Mammary epithelial cell (primary cell): ENCODE measurements at regions of chr5 and their contacts with region 1.

Region 1: DNA sequence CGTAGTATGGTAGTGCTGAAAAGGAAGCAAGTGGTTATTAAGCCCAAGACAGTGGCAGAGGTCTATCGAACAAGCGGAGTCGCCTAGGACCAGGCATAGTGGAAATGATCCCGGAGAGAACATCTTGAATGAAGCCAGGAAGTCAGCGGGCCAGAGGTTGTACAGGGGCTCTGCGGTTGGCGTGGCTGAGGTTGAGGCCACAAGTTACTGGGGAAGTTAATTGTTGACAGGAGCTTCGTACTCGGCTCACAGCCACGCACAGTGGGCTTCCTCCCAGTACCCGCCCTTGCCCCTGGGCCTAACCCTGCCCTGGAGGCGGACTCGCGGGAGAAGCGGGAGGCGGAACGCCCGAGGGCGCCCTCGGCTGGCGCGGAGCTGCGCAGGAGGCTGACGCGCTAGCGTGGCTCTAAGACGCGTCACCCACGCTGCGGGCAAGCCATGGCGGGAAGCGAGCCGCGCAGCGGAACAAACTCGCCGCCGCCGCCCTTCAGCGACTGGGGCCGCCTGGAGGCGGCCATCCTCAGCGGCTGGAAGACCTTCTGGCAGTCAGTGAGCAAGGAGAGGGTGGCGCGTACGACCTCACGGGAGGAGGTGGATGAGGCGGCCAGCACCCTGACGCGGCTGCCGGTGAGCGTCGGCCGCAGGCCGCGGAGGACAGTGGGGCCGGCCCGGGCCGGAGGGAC is at the start of gene FBXO4:
- DNase-seq: peak; percentile 68
- H3K4me3 ChIP-seq: peak within 1 kb of the TSS; percentile 60 to 72 (median 68)
- H3K27ac ChIP-seq: peak within 1 kb of the TSS; percentile 92
- H3K4me1 ChIP-seq: peaks cover 21% of the 10 kb centered on the region
- H3K27me3 ChIP-seq: no peaks in the 10 kb centered on the region
- CTCF ChIP-seq: peak in 1 of 2 donors; percentile 54
- total RNA-seq, gene FBXO4: 8.0 to 8.8 TPM

Region 2: GRCh38 chr5:41856644-41857491 is 68.1 kb before region 1 on chr5:
- CTCF ChIA-PET with region 1: no interaction called
- dilution Hi-C with region 1: no loop called
- in situ Hi-C with region 1: no loop called
- intact Hi-C with region 1: loop called (anchors 2 kb)
- DNase-seq: peak; percentile 47
- H3K4me3 ChIP-seq: no peak overlapping the region
- H3K27ac ChIP-seq: no peak overlapping the region
- H3K4me1 ChIP-seq: no peaks in the 10 kb centered on the region
- H3K27me3 ChIP-seq: no peaks in the 10 kb centered on the region
- CTCF ChIP-seq: peak; percentile 74 to 78

Region 3: DNA sequence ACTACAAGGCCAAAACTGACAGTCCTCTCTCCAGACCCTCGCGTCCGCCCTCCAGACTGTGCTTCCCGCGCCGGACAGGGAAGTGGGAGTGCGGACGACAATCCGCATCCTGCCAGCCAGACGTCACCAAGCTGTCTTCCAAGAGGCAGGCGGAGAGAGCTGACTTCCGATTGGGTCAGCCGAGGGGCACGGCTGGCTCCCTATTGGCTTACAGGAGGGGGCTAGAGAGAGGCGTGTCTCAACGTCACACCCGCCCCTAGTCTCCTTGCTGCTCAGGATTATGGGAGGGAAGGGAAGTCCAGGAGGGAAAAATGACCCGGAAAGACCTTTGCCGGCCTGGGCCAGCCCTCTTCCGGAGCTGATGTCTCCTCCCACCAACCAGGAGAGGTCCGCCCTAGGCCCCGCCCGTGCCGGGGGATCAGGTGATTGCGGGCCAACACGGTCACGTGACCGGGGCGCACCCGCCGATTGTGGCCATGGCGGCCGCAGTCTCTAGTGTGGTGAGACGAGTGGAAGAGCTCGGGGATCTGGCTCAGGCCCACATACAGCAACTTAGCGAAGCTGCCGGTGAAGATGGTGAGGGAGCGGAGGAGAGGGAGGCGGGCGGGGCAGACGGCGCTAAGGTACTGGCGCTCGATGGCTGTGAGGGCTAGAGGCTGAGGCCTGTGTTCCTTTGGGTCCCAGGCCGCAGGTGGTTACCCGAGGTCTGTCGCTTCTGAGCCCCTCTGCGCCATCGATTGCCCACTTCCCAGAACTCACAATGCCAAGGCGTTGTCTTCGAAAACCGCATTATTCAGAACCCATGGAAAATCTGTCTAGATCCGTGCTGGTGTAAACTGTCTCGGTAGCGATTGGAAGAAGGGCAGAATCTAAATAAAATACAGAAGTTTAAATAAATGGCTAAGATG is 20.9 kb before region 1 on chr5 and contains the start of gene RIMOC1:
- CTCF ChIA-PET with region 1: no interaction called
- dilution Hi-C with region 1: no loop called
- in situ Hi-C with region 1: no loop called
- intact Hi-C with region 1: loop called (anchors 2 kb)
- DNase-seq: peak; percentile 99
- H3K4me3 ChIP-seq: peak within 1 kb of the TSS; percentile 82 to 97 (median 84)
- H3K27ac ChIP-seq: peak within 1 kb of the TSS; percentile 87
- H3K4me1 ChIP-seq: peaks cover 17% of the 10 kb centered on the region
- H3K27me3 ChIP-seq: no peaks in the 10 kb centered on the region
- CTCF ChIP-seq: no peak
- total RNA-seq, gene RIMOC1: 16.7 to 31.5 TPM

Region 4: GRCh38 chr5:41985945-41986344 is 60.9 kb after region 1 on chr5:
- CTCF ChIA-PET with region 1: no interaction called
- dilution Hi-C with region 1: no loop called
- in situ Hi-C with region 1: no loop called
- intact Hi-C with region 1: no loop called
- DNase-seq: no peak
- H3K4me3 ChIP-seq: no peak overlapping the region
- H3K27ac ChIP-seq: no peak overlapping the region
- H3K4me1 ChIP-seq: no peaks in the 10 kb centered on the region
- H3K27me3 ChIP-seq: peaks cover 5% of the 10 kb centered on the region
- CTCF ChIP-seq: no peak

Region 5: DNA sequence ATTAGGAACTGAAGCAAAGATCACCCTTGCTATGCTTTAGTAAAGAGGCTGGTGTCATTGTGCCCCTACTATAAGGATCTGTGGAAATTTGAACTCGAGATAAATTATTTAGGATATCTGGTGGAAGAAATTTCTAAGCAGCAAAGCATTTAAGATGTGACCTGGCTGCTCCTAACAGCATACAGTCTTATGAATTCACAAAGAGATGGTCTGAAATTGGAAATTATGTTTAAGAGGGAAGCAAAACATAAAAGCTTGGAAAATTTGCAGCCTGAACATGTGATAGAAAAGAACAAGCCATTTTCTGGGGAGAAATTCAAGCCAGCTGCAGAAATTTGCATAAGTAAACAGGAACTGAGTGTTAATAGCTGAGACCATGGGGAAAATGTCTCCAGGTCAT is 223.8 kb after region 1 on chr5:
- CTCF ChIA-PET with region 1: no interaction called
- dilution Hi-C with region 1: no loop called
- in situ Hi-C with region 1: no loop called
- intact Hi-C with region 1: no loop called
- DNase-seq: no peak
- H3K4me3 ChIP-seq: no peak overlapping the region
- H3K27ac ChIP-seq: no peak overlapping the region
- H3K4me1 ChIP-seq: no peaks in the 10 kb centered on the region
- H3K27me3 ChIP-seq: no peaks in the 10 kb centered on the region
- CTCF ChIP-seq: no peak

Region 6: DNA sequence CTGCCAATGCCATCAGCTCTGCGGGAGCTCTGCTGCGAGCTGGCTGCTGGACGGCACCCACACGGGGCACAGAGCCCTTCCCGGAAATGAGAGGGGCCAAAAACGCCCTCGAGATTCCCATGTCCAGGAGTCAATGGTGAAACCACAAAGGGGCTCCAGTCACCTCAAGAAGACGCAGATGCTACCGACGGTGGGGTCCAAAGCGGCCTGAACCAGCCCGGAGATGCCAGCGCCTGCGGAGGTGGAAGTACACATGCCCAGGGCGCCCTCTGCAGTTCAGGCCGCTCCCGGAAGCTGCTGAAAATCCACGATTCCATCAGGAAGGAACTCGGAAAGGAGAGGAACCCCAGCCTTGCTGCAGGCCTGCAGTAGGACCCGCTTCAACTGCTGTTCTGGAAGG is 969.0 kb after region 1 on chr5:
- CTCF ChIA-PET with region 1: no interaction called
- dilution Hi-C with region 1: no loop called
- in situ Hi-C with region 1: no loop called
- intact Hi-C with region 1: no loop called
- DNase-seq: no peak
- H3K4me3 ChIP-seq: no peak overlapping the region
- H3K27ac ChIP-seq: no peak overlapping the region
- H3K4me1 ChIP-seq: no peaks in the 10 kb centered on the region
- H3K27me3 ChIP-seq: no peaks in the 10 kb centered on the region
- CTCF ChIP-seq: no peak